HCT116 (cell line): ENCODE measurements at regions of chr3 and their contacts with region 1.

Region 1: DNA sequence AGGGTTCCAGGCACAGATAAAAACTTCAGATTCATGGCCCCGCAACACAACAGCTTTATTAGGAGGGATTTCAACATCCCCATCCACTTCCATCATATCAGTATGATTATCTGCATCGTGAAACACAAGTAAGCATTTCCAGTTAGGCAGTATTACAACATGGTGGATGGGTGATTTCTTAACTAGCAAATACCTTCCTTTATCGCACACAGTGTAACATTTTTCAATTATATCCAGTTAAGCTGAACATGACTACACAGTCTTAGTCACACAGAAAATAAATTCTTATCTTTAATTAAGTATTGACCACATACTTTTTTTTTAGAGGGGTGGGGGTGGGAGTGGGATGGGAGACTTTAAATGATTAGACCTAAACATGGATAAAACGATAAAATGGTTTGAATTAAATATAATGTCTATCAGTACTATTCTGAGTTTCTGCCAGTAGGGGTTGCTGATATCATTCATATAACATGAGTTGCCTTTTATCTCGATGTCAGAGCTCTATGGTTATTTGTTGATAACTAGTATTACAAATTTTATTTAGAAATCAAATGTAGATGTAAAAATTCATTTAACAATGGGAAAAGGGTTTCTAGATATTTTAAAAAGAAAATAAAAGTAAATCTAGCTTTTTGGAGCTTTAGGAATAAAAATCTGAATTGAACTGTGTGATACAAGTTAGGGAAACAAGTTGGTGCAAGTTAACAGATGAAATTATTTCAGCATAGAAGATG is 146.6 kb downstream of the TBL1XR1 start:
- DNase-seq: peak; percentile 19
- ATAC-seq: peak; percentile 80
- H3K4me3 ChIP-seq: no peak overlapping the region
- H3K27ac ChIP-seq: no peak overlapping the region; the same call in 1 of the 2 replicates
- H3K4me1 ChIP-seq: no peaks in the 10 kb centered on the region
- H3K27me3 ChIP-seq: no peaks in the 10 kb centered on the region
- CTCF ChIP-seq: peak; percentile 25 to 63 (median 39); a peak in 3 of 6 replicates
- POLR2A ChIP-seq: no peak
- RAD21 ChIP-seq: peak; percentile 78

Region 2: DNA sequence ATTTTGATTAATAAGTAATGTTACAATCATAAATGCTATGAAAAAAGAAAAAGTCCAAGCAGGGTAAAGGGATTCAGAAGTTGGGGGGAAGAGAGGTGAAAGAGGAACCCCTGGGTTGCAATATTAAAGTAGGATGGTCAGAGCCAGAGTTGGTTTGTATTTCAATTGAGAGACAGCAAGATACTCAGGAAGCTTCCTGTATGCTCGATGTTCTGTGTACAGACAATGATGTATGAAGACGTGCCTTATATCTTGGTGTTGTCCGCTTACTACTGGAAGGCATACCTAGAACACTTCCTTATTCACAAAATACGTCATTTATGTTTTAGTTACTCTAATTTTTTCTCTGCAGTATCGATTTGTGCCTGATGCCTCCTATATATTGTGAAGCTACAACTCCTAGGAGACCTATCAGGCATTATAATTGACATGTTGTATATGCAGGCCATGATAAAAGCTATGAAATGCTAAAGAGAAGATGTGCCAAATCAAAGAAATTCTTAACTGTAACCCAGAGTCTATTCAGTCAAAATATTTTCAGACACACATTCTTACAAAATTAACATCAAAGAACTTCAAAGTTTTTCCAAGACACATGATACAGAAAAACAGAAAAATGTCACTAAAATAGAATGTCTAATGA is 59.1 kb after region 1 on chr3:
- CTCF ChIA-PET with region 1: no interaction called
- POLR2A ChIA-PET with region 1: no interaction called
- RAD21 ChIA-PET with region 1: no interaction called
- intact Hi-C with region 1: no loop called
- DNase-seq: no peak
- ATAC-seq: no peak
- H3K4me3 ChIP-seq: no peak overlapping the region
- H3K27ac ChIP-seq: no peak overlapping the region
- H3K4me1 ChIP-seq: peaks cover 0 to 6% of the 10 kb centered on the region in 2 experiments; a peak in 1 of 4 replicates
- H3K27me3 ChIP-seq: no peaks in the 10 kb centered on the region
- CTCF ChIP-seq: no peak
- POLR2A ChIP-seq: no peak
- RAD21 ChIP-seq: no peak

Region 3: DNA sequence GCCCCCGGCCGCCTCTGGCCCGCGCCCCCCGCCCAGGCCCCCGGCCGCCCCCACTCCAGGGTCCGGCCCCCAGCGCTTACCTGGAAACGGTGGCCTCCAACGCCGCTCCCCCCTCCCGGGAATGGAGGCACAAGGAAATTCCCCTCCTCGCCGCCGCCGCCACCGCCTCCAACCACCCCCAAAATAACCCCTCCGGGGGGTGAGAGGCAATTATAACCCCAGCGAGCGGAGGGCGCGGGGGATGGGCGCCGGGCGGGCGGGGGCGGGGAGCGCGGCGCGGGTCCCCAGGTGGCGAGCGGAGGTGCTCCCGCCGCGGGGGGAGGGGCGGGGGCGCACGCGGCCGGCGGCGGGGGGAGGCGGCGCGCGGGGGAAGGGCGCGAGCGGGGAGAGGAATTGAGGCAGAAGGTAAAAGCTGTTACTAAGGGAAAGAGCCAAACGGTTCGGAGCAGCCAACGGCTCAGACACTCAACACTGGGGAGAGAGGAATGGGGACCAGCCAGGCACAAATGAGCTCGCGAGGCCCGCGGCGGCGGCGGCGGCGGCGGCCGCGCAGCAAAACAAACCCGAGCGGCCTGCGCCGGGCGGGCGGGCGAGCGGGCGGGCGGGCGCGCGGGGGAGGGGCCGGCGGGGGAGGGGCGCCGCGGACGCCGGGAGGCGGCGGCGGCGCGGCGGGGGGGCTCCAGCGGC is 146.5 kb after region 1 on chr3 and contains the start of gene TBL1XR1:
- CTCF ChIA-PET with region 1: no interaction called
- POLR2A ChIA-PET with region 1: interaction called, 3 read pairs
- RAD21 ChIA-PET with region 1: interaction called in 1 of 2 experiments, 3 read pairs
- intact Hi-C with region 1: loop called (anchors 5 kb)
- DNase-seq: peak; percentile 82
- ATAC-seq: peak; percentile 76
- H3K4me3 ChIP-seq: peak within 1 kb of the TSS; percentile 87 to 95
- H3K27ac ChIP-seq: peak within 1 kb of the TSS; percentile 86
- H3K4me1 ChIP-seq: peaks cover 25 to 42% of the 10 kb centered on the region in 2 experiments
- H3K27me3 ChIP-seq: no peaks in the 10 kb centered on the region
- CTCF ChIP-seq: no peak
- POLR2A ChIP-seq: no peak
- RAD21 ChIP-seq: peak; percentile 30
- total RNA-seq, gene TBL1XR1: 180 TPM

Region 4: DNA sequence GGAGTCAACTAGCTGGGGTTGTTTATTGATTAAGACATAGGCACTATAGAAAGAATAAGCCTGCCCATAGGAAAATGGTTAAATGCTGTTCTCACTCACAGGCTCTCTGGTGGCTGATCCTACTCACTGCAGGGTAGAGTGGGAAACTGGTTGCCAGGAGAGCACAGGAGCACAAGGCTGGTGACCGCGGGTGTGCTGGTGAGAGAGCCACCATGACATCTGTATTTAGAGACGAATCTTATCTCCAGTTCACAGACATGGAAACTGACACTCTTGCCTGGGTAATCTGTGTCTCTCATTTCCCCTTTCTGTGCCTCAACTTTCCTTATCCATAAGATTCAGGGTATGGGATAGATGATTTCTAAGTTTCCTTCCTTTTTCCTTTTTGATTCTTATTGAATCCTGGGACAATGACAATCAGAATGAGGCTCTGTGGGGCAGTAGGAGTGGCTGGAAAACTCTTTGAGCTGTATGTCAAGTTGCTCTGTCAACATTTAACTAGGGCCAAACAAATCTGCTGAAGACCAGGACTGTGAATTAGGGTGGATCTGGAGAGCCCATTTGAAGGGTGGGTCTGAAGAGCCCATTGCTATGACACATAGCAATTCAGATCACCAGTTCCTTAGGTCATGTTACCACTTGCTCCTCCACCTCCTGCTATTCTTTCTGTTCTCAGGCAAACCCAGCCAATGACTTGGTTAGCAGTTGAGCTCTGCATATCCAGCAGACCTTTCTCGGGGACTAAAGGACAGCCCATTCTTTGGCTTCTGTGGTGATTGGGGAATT is 432.7 kb after region 1 on chr3:
- CTCF ChIA-PET with region 1: no interaction called
- POLR2A ChIA-PET with region 1: no interaction called
- RAD21 ChIA-PET with region 1: no interaction called
- intact Hi-C with region 1: loop called (anchors 1 kb)
- DNase-seq: peak; percentile 31
- ATAC-seq: peak; percentile 87
- H3K4me3 ChIP-seq: no peak overlapping the region
- H3K27ac ChIP-seq: no peak overlapping the region
- H3K4me1 ChIP-seq: peaks cover 14 to 17% of the 10 kb centered on the region in 2 experiments
- H3K27me3 ChIP-seq: no peaks in the 10 kb centered on the region
- CTCF ChIP-seq: peak in 2 of 3 experiments; percentile 61 to 64; a peak in 4 of 6 replicates
- POLR2A ChIP-seq: no peak
- RAD21 ChIP-seq: peak; percentile 54

Region 5: GRCh38 chr3:177665122-177665808 is 614.6 kb after region 1 on chr3:
- CTCF ChIA-PET with region 1: no interaction called
- POLR2A ChIA-PET with region 1: no interaction called
- RAD21 ChIA-PET with region 1: no interaction called
- intact Hi-C with region 1: loop called (anchors 5 kb)
- DNase-seq: no peak
- ATAC-seq: no peak
- H3K4me3 ChIP-seq: no peak overlapping the region
- H3K27ac ChIP-seq: no peak overlapping the region
- H3K4me1 ChIP-seq: no peaks in the 10 kb centered on the region
- H3K27me3 ChIP-seq: no peaks in the 10 kb centered on the region
- CTCF ChIP-seq: no peak
- POLR2A ChIP-seq: no peak
- RAD21 ChIP-seq: no peak

Region 6: DNA sequence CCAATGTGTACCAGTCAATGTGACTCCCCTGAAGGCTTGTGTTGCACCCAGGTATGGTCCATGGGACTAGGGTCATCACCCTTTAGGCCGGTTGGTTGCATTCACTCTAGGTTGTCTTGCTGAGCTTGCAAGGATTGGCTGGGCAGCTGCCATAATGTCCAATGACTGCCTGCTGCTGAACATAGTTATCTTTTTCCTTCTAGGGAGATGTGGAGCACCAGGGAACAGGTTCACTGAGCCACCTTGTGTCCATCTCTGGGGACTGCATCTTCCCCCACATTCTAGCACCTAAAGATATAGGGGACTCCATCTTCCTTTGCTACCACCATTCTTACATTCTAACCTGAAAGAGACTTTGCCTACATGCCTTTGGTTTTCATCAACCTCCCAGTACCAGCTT is 727.0 kb after region 1 on chr3:
- CTCF ChIA-PET with region 1: interaction called, 4 read pairs
- POLR2A ChIA-PET with region 1: no interaction called
- RAD21 ChIA-PET with region 1: no interaction called
- intact Hi-C with region 1: loop called (anchors 2 kb)
- DNase-seq: peak; percentile 51
- ATAC-seq: peak; percentile 95
- H3K4me3 ChIP-seq: no peak overlapping the region
- H3K27ac ChIP-seq: no peak overlapping the region
- H3K4me1 ChIP-seq: peaks cover 0 to 8% of the 10 kb centered on the region in 2 experiments; a peak in 1 of 4 replicates
- H3K27me3 ChIP-seq: no peaks in the 10 kb centered on the region
- CTCF ChIP-seq: peak; percentile 22 to 74 (median 69); a peak in 5 of 6 replicates
- POLR2A ChIP-seq: no peak
- RAD21 ChIP-seq: peak; percentile 81